ENCODE measurements at regions of chr11 and their contacts with region 1.

Region 1: DNA sequence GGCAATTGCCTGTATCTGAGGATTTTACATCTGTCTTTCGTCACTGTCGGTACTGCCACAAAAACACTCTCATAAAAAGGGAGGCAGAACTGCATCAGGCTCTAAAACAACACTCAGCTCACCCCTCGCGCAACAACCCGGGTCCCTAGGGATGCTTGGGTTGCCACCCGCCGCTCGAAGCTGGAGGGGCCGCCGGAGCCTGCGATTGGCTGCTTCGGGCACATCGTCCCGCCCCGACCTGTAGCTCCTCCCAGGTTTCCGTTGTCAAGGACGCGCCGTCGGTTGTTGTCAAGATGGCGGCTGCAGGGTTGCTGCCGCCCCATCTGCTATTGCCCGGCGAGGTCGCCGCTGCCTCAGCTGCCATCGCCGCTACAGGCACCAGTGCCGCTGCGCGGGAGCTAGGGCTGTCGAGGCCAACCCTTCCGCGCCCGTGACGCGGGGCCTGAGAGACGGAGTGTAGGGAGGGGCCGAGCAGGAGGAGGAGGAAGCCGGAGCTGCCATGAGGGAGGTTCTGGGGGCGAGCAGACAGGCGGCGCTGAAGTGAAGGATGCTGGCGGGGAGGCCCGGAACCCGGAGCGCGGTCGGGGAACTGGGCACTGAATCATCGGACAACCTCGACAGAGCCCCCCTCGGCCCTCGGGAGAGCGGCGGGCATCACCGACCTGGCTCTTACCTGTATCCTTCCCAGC is at the start of gene CEP126:
- DNase-seq: peak; percentile 97 to 98
- H3K4me3 ChIP-seq: peak within 1 kb of the TSS; percentile 66
- H3K4me3 Mint-ChIP-seq: peak within 1 kb of the TSS; percentile 92
- H3K27ac Mint-ChIP-seq: peak within 1 kb of the TSS; percentile 94
- H3K4me1 ChIP-seq: peaks cover 31% of the 10 kb centered on the region
- H3K4me1 Mint-ChIP-seq: peaks cover 41% of the 10 kb centered on the region
- H3K27me3 ChIP-seq: no peaks in the 10 kb centered on the region
- H3K27me3 Mint-ChIP-seq: no peaks in the 10 kb centered on the region
- CTCF ChIP-seq: peak; percentile 27 to 94
- total RNA-seq, gene CEP126: 4.3 and 4.6 TPM in 2 replicates

Region 2: DNA sequence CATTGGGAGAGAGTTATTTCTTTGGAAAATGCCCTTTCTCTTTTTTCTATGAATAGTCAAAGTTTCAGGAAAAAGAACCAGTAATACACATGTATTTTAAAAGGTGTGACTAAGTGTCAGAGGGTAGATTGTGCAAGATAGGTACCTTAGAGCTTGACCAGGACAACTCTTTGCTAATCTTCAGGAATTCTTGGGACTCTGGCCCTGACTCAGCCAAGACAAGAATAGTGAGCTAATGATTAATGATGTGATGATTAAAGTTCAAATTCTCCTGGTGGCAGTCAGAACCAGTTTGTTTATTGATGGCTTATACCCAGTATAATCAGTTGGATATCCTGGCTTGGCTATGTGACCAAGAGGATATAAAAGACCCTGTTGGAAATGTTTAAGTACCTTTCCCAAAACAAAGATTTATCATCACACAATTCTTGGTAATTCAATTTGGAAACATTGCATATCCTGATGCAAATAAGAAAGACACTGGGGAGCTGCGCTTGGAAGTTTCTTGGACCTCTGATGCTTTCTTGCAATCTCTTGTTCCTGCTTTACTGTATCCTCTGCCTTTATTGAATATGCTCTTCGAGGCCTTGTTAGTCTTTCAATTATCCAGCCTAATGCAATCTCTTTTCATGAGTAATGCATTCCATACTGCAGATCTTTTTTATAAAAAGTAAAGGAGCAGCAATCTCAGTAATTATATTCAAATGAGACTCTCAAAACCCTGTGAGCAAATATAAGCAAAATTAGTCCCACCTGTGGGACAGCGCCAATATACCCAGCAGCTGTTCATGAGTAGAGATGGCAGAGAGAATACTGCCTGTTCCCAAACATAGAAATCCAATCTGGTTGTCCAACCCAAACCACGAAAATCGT is 48.0 kb before region 1 on chr11:
- CTCF ChIA-PET with region 1: interaction called, 37 read pairs
- POLR2A ChIA-PET with region 1: interaction called, 3 read pairs
- intact Hi-C with region 1: loop called (anchors 1 kb)
- DNase-seq: peak; percentile 89 to 91
- H3K4me3 ChIP-seq: no peak overlapping the region
- H3K4me3 Mint-ChIP-seq: peak overlapping the region; percentile 31
- H3K27ac Mint-ChIP-seq: peak overlapping the region; percentile 79
- H3K4me1 ChIP-seq: peaks cover 50% of the 10 kb centered on the region
- H3K4me1 Mint-ChIP-seq: peaks cover 34% of the 10 kb centered on the region
- H3K27me3 ChIP-seq: no peaks in the 10 kb centered on the region
- H3K27me3 Mint-ChIP-seq: no peaks in the 10 kb centered on the region
- CTCF ChIP-seq: no peak

Region 3: DNA sequence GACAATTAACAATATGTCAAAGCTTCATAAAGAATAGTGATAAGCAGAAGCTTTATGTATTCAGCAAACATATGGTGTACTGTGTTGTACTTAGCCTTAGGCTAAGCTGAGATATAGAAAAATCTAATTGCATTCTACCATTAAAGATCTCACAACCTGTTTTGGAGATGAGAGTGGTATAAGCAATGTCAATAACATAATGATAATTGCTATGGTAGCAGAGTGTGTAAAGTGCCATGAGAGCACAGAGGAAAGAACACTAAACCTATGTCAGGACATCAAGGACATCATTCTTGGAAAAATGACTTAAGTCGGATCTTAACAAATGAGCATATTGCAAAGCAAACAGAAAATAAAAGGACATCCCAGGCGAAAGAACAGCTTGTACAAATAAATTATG is 30.0 kb after region 1 on chr11:
- CTCF ChIA-PET with region 1: interaction called, 13 read pairs
- POLR2A ChIA-PET with region 1: no interaction called
- intact Hi-C with region 1: loop called (anchors 5 kb)
- DNase-seq: no peak
- H3K4me3 ChIP-seq: no peak overlapping the region
- H3K4me3 Mint-ChIP-seq: no peak overlapping the region
- H3K27ac Mint-ChIP-seq: no peak overlapping the region
- H3K4me1 ChIP-seq: no peaks in the 10 kb centered on the region
- H3K4me1 Mint-ChIP-seq: peaks cover 7% of the 10 kb centered on the region
- H3K27me3 ChIP-seq: no peaks in the 10 kb centered on the region
- H3K27me3 Mint-ChIP-seq: no peaks in the 10 kb centered on the region
- CTCF ChIP-seq: no peak

Region 4: DNA sequence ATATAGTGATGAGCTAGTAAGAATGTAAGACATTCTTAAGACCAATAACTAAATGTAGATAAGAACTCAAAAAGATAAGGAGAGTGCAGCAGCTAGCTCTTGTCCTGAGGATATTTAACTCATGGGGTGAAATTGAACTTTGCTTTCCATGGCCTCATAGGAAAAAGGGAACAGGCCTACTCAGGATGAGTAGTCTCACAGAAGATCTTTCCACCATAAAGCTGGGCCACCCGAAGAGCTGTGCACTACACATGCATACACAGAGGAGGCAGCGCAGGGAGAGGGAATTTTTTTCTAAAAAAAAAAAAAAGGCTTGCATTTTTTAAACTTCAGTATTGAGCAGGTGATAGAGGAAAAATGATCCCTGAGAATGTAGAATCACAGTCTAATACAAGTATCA is 72.5 kb after region 1 on chr11:
- CTCF ChIA-PET with region 1: interaction called, 11 read pairs
- POLR2A ChIA-PET with region 1: no interaction called
- intact Hi-C with region 1: loop called (anchors 5 kb)
- DNase-seq: peak; percentile 64 to 80
- H3K4me3 ChIP-seq: no peak overlapping the region
- H3K4me3 Mint-ChIP-seq: peak overlapping the region; percentile 24
- H3K27ac Mint-ChIP-seq: peak overlapping the region; percentile 54
- H3K4me1 ChIP-seq: peaks cover 24% of the 10 kb centered on the region
- H3K4me1 Mint-ChIP-seq: peaks cover 20% of the 10 kb centered on the region
- H3K27me3 ChIP-seq: no peaks in the 10 kb centered on the region
- H3K27me3 Mint-ChIP-seq: no peaks in the 10 kb centered on the region
- CTCF ChIP-seq: no peak

Region 5: DNA sequence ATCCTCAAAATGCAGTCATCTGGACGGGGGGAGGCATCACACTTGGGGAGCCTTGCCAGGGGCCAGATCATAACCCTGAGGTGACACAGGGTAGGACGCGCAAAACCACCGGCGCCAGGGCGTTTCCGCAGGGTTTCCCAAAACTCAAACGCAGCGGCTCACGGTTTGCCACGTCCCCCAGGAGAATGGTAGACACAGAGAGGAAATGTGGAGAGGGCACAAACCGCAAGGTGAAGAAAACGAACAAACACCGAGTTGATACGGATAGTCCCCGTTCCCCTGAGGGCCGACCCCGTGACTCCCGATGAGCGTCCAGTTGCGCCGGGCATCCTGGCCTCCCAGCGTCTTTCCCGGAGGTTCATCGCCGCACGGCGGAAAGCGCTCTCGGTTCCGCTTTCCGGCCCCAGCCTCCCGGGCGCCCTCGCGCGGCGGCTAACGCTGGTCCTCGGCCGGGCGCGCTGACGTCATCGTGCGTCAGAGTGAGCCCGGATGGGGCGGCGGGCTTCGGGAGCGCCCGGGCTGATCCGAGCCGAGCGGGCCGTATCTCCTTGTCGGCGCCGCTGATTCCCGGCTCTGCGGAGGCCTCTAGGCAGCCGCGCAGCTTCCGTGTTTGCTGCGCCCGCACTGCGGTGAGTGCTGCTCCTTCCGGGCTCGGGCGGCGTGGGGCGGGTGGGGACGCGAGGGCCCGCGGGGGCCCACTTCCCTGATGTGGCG is 432.0 kb after region 1 on chr11 and contains the start of gene BIRC2:
- CTCF ChIA-PET with region 1: no interaction called
- POLR2A ChIA-PET with region 1: interaction called, 8 read pairs
- intact Hi-C with region 1: loop called (anchors 1 kb)
- DNase-seq: peak; percentile 96 to 100
- H3K4me3 ChIP-seq: peak within 1 kb of the TSS; percentile 52
- H3K4me3 Mint-ChIP-seq: peak within 1 kb of the TSS; percentile 93
- H3K27ac Mint-ChIP-seq: peak within 1 kb of the TSS; percentile 68
- H3K4me1 ChIP-seq: peaks cover 17% of the 10 kb centered on the region
- H3K4me1 Mint-ChIP-seq: peaks cover 8% of the 10 kb centered on the region
- H3K27me3 ChIP-seq: no peaks in the 10 kb centered on the region
- H3K27me3 Mint-ChIP-seq: no peaks in the 10 kb centered on the region
- CTCF ChIP-seq: peak; percentile 71 to 97
- total RNA-seq, gene BIRC2: 52.7 and 53.5 TPM in 2 replicates

Measured in Caco-2 (cell line).